Heart right ventricle (tissue), 16 donors: ENCODE measurements at regions of chr10 and their contacts with region 1.

Region 1: DNA sequence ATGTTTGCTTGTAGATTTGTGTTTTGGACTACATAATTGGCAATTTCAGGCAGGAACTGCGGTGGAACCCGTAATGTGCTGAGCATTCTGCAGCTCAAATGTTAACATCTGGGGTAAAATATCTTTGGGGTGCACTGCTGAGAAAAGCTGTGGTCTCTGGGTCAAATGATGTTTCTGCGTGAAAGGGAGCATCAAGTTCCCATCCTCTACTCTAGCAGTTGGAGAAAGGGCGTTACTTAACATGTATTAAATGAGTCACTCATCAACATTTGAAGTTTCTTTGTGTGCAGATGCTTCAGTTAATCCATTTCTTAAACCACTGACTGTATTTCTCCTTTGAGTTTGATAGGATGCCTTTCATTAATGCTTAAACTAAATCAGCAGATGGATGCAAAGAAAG is 273.1 kb upstream of the PITRM1 start:
- DNase-seq: no peak
- ATAC-seq: no peak
- H3K4me3 ChIP-seq: no peak overlapping the region
- H3K27ac ChIP-seq: no peak overlapping the region
- H3K4me1 ChIP-seq: no peaks in the 10 kb centered on the region
- H3K27me3 ChIP-seq: no peaks in the 10 kb centered on the region
- CTCF ChIP-seq: no peak

Region 2: DNA sequence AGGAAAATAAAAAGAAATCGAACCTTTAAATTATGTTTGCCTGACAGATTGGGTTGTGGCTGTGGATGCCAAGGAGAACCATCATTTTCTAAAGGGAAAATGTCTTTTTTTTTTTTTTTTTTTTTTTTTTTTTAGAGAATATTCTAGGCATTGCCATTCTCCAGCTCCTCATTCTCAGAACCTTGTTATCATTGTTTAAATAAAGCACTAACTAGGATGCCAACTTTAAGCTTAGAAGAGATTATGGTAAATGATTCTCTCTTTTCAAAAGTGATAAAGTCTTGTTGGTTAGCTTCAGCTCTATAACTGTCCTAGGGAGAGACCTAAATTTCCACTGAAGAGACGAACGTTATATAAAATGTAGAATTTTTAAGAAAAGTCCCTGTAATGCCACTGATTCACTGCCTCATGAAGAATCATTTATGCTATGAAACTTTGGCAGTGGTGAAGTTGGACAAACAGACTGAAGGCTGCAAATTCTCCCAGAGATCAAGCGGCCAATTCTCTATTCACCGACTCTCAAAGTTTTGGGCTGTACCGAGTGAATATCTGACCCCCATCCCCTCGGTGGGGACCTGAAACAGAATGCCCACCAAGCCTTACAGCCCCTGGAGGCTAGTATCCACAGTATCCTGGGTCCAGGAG is 65.1 kb before region 1 on chr10:
- intact Hi-C with region 1: no loop called
- DNase-seq: no peak
- ATAC-seq: no peak
- H3K4me3 ChIP-seq: no peak overlapping the region
- H3K27ac ChIP-seq: no peak overlapping the region
- H3K4me1 ChIP-seq: no peaks in the 10 kb centered on the region
- H3K27me3 ChIP-seq: no peaks in the 10 kb centered on the region
- CTCF ChIP-seq: no peak

Region 3: DNA sequence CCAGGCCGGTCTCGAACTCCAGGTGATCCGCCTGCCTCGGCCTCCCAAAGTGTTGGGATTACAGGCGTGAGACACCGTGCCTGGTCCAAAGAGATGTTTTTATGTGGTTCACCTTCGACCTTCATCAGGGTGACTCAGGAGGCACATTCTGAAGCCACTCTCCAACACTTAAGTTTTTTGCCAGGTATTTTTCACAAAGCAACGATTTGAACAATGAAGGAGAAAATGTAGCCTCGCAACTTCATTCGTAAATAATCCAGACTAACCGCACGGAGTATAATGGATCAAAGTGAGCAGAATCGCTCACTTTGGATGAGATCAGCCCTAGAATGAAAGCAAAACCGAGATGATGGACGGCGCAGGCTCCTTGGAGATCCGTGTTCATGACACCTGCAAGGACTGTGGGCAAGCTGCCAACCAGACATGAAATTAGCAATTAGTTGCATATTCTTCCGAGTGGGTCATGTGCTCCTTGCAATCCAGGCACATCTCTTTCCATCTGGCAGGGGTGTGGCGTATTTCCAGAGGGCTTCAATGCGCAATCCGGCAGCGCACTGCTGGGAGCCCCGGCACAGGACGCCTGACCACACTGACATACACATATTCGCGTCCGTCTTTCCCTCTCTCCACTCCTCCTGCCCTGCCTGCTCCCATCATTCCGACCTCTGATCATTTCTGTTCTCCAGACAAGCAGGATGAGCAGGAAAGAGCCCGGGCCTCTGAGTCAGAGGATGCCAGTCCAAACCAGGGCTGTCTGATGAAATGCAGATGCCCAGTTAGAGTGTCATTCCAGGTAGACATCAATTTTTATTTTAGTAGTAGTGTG is 190.9 kb after region 1 on chr10:
- intact Hi-C with region 1: loop called in 1 of 10 experiments (anchors 10 kb)
- DNase-seq: no peak
- ATAC-seq: no peak
- H3K4me3 ChIP-seq: no peak overlapping the region
- H3K27ac ChIP-seq: no peak overlapping the region
- H3K4me1 ChIP-seq: no peaks in the 10 kb centered on the region
- H3K27me3 ChIP-seq: no peaks in the 10 kb centered on the region
- CTCF ChIP-seq: no peak